Common myeloid progenitor, CD34-positive (primary cell): ENCODE measurements at regions of chr5 and their contacts with region 1.

Region 1: DNA sequence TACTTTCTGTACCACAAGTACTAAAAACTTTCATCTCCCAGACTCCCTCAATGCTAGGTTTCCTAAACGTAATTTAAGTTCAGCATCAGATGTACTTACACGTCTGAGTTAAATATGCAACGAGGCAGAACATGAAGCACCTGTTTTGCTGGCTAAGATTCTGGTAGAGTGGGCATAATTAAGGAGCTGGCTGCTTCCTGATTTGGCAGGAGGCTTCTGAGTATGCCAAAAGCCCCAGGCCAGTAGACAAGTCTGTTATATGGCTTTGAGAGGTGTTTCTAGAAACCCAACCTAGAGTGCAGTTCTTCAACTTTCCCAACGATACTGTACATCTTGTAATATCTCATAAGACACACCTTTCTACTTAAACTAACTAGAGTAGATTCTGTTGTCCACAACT is 13.6 kb downstream of the TICAM2 start:
- DNase-seq: no peak
- H3K4me3 ChIP-seq: no peak overlapping the region
- H3K27ac ChIP-seq: no peak overlapping the region
- H3K4me1 ChIP-seq: no peaks in the 10 kb centered on the region
- H3K27me3 ChIP-seq: no peaks in the 10 kb centered on the region

Region 2: DNA sequence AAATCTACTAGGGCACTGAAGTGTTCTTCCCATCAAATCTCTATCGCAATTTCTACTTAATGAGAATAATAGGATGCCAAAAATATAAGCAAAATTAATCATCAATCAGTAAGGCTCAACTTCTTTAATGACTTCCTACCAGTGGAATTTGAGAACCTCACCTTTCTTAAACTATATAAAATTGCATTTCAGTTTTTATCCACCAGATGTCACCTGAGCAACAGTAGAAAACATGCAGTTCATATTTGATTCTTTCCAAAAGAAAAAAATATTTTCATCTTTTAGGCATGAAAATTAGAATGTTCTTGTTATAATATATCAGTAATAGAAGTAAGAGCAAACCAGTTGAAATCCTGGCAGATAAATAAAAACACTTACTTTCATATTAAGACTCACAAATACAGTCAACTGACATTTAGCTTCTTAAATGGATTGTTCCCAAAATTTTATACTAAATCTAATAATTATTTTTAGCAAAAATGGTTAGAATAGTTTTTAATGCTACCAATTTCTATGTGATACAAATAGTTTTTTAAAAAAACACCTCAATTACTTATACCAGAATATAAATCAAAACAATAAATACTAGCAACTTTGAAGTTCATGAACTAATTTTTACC is 278.8 kb before region 1 on chr5:
- CTCF ChIA-PET with region 1: interaction called, 26 read pairs
- POLR2A ChIA-PET with region 1: no interaction called
- DNase-seq: peak; percentile 39 to 71 (median 58)
- H3K4me3 ChIP-seq: no peak overlapping the region
- H3K27ac ChIP-seq: no peak overlapping the region
- H3K4me1 ChIP-seq: no peaks in the 10 kb centered on the region
- H3K27me3 ChIP-seq: peaks cover 0 to 3% (median 0%) of the 10 kb centered on the region in 5 experiments

Region 3: DNA sequence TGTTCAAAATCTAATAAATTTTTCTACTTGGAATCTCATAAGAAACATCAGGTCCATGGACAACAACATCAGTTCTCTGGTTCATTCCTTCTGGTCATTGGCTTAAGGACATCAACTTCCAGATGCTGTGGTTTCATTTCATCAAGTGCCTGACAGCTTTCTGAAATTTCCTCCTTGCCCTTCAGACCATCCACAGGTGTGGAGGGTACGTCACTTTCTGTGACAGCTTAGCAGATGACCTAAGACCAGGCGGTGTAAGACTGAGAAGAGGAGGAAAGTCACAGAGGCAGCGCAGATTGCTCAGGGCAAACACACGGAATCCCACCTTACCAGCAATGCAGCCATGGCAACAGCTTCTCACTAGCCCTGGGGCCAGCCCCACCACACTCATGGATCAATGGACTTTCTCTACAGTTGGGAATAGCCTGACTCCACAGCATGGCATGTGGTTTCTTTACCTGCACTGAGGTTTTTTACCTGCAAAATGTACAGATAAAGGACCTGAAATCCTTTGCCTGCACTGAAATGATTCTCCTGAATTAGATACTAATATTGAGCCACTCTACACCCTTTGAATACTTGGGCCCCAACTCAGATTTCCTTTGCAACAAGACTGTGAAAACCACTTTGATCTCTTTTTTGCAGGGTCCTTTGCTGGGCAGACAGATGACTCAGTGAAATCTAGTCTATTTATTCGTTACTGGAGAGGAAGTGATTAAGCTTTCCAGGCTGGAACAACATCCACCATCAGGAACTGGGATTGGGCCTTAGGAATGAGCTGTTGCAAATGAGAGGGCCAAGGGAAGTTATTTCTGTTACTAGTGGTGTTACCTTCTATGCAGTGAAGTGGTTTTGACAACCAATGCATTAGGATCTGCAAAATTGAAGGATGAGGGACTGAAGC is 13.2 kb before region 1 on chr5:
- CTCF ChIA-PET with region 1: interaction called, 16 read pairs
- POLR2A ChIA-PET with region 1: no interaction called
- DNase-seq: no peak
- H3K4me3 ChIP-seq: no peak overlapping the region
- H3K27ac ChIP-seq: no peak overlapping the region
- H3K4me1 ChIP-seq: peaks cover 0 to 3% (median 0%) of the 10 kb centered on the region in 4 experiments
- H3K27me3 ChIP-seq: no peaks in the 10 kb centered on the region